Dorsolateral prefrontal cortex (tissue), 120 donors: ENCODE measurements at regions of chr11 and their contacts with region 1.

Region 1: DNA sequence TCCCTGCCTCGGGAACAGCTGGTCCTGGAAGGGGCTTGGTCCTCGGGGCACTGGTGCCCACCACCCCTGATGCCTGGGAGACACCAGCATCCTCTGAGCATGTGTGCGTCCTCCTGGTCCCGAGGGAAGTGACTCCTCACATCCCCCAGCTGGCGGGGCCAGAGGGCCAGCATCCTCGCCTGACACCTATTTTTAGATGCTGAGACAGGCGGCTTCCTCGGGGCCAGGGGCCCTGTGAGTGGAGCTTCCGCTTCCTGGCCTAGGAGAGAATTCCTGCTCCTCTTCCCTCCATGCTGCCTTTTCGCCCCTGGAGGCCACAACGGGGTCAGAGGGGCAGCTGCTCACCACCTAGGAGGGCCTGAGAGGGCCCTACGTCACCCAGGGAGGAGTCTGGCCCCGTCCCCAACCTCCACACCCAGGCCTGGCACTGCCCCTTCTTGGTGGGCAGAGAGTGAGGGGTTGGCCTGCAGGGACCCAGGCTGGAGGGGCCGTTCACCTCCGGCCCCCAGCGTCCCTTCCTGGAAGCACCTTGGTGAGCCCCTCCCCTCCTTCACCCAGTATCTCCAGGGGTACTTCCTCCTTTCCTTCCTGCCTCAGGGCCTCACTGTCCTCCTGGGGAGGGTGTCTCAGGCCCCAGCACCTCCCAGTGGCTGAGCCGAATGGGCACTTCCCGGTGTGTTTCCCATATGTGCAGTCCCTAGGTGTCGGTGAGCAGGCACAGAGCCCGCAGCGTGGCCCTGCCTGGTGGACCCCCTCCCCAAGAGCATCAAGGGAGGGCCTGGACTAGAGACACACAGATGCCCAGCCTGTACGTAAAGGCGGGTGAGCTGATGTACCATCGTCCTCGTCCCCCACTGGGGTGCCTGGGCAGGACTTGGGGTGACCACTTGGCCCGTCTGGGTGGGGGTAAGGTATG is 6.1 kb downstream of the CD81 start:
- DNase-seq: no peak
- H3K4me3 ChIP-seq: peak overlapping the region in 34 of 59 donors; percentile 1 to 98 (median 22)
- H3K27ac ChIP-seq: peak overlapping the region; percentile 37 to 96 (median 83)
- H3K27me3 ChIP-seq: no peaks in the 10 kb centered on the region
- CTCF ChIP-seq: peak in 3 of 56 donors; percentile 9 to 11 (median 10)

Region 2: GRCh38 chr11:2400069-2400760 is 17.0 kb after region 1 on chr11 and contains the start of gene TSSC4:
- intact Hi-C with region 1: loop called in 1 of 2 experiments (anchors 2 kb)
- DNase-seq: peak; percentile 98 to 99 (median 98)
- H3K4me3 ChIP-seq: peak within 1 kb of the TSS; percentile 65 to 100 (median 98)
- H3K27ac ChIP-seq: peak within 1 kb of the TSS; percentile 68 to 99 (median 96)
- H3K27me3 ChIP-seq: no peaks in the 10 kb centered on the region
- CTCF ChIP-seq: peak; percentile 95 to 100 (median 100)
- total RNA-seq, gene TSSC4: 23.7 to 48.6 (median 34.3) TPM